ENCODE measurements at regions of chr7 and their contacts with region 1.

Region 1: GRCh38 chr7:44973610-44974401 is 5.0 kb downstream of the MYO1G start:
- DNase-seq: peak; percentile 55
- ATAC-seq: peak; percentile 64
- H3K4me3 Mint-ChIP-seq: no peak overlapping the region
- H3K27ac Mint-ChIP-seq: no peak overlapping the region
- H3K4me1 Mint-ChIP-seq: no peaks in the 10 kb centered on the region
- H3K27me3 Mint-ChIP-seq: no peaks in the 10 kb centered on the region; the same call in 1 of the 2 replicates
- CTCF ChIP-seq: 0 out of 2 replicates have a peak, but pooled peaks have one; percentile 28

Region 2: DNA sequence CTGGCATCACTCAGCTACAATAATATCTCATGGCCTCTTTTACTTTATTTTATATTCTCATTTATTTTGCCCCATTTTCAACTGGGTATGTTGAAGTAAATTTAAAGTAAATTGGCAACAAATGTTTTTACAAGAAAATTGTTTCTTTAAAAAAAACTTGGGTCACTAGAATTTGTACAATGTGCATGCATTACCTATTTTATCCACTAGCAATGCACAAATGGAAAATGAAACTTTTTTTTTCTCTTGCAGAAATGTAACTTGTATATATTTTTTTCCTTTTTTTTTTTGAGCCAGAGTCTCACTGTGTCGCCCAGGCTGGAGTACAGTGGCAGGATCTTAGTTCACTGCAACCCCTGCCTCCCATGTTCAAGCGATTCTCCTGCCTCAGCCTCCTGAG is 115.6 kb before region 1 on chr7:
- CTCF ChIA-PET with region 1: interaction called, 14 read pairs
- POLR2A ChIA-PET with region 1: no interaction called
- DNase-seq: no peak
- ATAC-seq: no peak
- H3K4me3 Mint-ChIP-seq: no peak overlapping the region
- H3K27ac Mint-ChIP-seq: no peak overlapping the region
- H3K4me1 Mint-ChIP-seq: no peaks in the 10 kb centered on the region
- H3K27me3 Mint-ChIP-seq: no peaks in the 10 kb centered on the region
- CTCF ChIP-seq: no peak

Region 3: GRCh38 chr7:44999245-45000095 is 25.7 kb after region 1 on chr7:
- CTCF ChIA-PET with region 1: interaction called, 27 read pairs
- POLR2A ChIA-PET with region 1: no interaction called
- DNase-seq: peak; percentile 99
- ATAC-seq: peak; percentile 94
- H3K4me3 Mint-ChIP-seq: peak overlapping the region; percentile 93
- H3K27ac Mint-ChIP-seq: peak overlapping the region; percentile 100
- H3K4me1 Mint-ChIP-seq: peaks cover 13% of the 10 kb centered on the region
- H3K27me3 Mint-ChIP-seq: no peaks in the 10 kb centered on the region
- CTCF ChIP-seq: no peak

Region 4: GRCh38 chr7:45089341-45089891 is 115.6 kb after region 1 on chr7:
- CTCF ChIA-PET with region 1: interaction called, 21 read pairs
- POLR2A ChIA-PET with region 1: no interaction called
- DNase-seq: peak; percentile 95
- ATAC-seq: peak; percentile 61
- H3K4me3 Mint-ChIP-seq: peak overlapping the region; percentile 74
- H3K27ac Mint-ChIP-seq: no peak overlapping the region
- H3K4me1 Mint-ChIP-seq: peaks cover 15% of the 10 kb centered on the region
- H3K27me3 Mint-ChIP-seq: peaks cover 24% of the 10 kb centered on the region
- CTCF ChIP-seq: no peak

Region 5: DNA sequence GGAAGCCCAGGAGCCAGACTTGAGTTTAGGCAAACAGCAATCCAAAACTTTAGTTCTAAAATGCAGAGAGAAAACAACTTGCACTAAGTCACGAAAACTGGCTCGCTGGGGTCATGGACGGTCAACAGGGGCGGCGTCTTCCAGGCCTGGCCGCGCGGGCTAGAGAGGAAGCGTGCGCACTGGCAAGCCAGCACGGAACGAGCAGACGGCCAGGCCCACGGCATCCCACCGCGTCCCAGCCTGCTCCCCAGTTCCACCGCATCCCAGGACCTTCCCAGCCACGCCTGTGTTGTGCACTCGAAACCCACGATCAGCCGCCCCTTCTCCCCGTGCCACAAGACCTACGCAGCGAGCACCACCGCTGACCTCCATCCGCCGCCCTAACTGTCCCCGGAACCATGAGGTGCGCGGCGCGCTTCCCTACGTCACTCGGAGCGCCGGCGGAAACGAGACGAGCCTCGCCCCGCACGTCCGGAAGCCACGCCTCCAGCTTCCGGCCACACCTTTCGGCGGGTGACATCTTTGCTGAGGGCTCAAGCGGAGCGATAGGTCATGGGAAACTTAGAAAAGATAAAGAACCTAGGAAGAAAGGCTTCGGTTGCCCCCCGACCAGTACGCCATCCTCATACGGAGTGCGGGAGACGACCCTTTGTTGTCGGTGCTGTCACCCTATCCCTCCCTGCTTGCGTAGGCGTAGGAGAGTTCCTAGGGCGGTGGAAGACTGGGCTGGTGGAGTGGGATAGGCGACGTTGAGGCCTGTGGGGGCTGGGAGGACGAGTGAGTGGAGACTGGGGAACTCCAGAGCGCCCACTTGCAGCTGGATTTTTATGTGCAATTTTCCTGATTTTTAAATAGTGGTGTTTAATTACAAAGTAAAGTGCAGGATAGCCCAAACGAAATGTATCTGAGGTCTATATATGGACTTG is 137.8 kb after region 1 on chr7 and contains the start of gene TBRG4:
- CTCF ChIA-PET with region 1: interaction called, 11 read pairs
- POLR2A ChIA-PET with region 1: no interaction called
- DNase-seq: peak; percentile 93
- ATAC-seq: peak; percentile 94
- H3K4me3 Mint-ChIP-seq: peak within 1 kb of the TSS; percentile 99
- H3K27ac Mint-ChIP-seq: peak within 1 kb of the TSS; percentile 99
- H3K4me1 Mint-ChIP-seq: peaks cover 12% of the 10 kb centered on the region
- H3K27me3 Mint-ChIP-seq: peaks cover 14% of the 10 kb centered on the region
- CTCF ChIP-seq: no peak
- total RNA-seq, gene TBRG4: 122 to 167 TPM (median 124 TPM) in 3 replicates

Region 6: DNA sequence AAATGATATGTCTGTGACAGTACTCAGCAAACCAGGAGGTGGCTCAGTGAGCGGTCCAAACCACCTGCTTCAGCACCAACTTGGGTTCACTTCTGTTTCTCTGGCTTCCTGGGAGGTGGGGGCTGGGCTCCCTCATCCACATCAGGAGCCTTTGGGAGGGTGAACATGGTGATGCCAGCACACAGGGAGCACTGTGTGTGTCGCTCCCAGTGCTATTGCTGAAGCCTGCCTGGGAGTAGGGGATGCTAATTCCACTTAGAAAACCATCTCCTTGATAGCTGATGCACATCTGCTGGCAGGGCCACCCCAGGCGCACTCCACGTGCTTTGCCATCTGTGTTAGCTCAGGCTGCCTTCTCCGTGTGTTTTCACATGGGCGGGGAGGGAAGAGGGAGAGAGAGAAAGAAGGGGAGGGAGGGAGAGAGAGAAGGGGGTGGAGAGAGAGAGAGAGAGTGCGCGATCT is 241.8 kb after region 1 on chr7:
- CTCF ChIA-PET with region 1: no interaction called
- POLR2A ChIA-PET with region 1: no interaction called
- DNase-seq: no peak
- ATAC-seq: no peak
- H3K4me3 Mint-ChIP-seq: no peak overlapping the region
- H3K27ac Mint-ChIP-seq: no peak overlapping the region
- H3K4me1 Mint-ChIP-seq: peaks cover 12% of the 10 kb centered on the region
- H3K27me3 Mint-ChIP-seq: no peaks in the 10 kb centered on the region; the same call in 1 of the 2 replicates
- CTCF ChIP-seq: no peak

Measured in WTC11 (cell line).